Colonic mucosa (tissue), 4 donors: ENCODE measurements at regions of chr3 and their contacts with region 1.

Region 1: DNA sequence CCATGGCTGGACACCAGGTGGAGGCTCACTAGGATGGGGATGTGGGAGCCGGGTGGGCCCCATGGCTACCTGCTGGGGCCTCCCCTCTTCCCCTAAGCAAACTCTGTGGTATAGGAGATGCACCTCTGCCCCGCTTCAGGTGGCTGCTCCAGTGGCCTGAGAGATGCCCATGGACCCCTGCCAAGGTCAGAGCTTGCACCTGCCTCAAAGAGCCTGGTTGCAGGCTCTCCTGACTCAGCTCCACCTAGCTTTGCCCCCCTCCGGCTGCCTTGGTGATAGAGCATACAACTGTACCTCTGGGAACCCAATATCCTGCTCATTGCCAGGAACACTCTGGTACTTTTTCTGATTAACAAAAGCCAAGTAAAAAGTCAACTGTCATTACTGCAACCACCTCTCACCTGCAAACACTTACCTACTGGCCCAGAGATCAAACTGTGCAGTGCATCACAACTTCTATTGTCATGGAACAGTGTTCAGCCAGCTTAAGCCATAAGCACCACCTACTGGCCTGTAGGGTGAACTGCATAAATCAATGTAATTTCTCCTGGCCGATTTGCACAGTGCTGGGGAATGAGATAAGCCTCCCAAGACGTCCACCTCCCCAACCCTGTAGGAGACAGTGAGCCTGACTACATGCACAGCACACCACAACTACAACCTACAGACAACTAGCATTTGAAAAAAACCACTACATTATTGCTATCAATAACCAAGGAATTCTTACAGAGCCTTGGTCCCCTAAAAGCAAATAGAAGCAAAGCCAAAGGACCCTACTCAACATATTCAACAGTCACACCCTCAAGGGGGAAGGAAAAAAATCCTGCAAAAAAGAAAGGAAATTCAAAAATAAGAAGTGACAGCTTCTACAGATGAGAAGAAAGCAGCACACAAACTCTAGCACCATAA is 352.4 kb upstream of the ARHGEF26 start:
- DNase-seq: peak; percentile 56
- H3K4me3 ChIP-seq: no peak overlapping the region
- H3K27ac ChIP-seq: no peak overlapping the region
- H3K4me1 ChIP-seq: no peaks in the 10 kb centered on the region
- H3K27me3 ChIP-seq: no peaks in the 10 kb centered on the region
- CTCF ChIP-seq: peak; percentile 82

Region 2: GRCh38 chr3:153595186-153595815 is 173.5 kb before region 1 on chr3:
- intact Hi-C with region 1: loop called (anchors 10 kb)
- DNase-seq: no peak
- H3K4me3 ChIP-seq: no peak overlapping the region
- H3K27ac ChIP-seq: no peak overlapping the region
- H3K4me1 ChIP-seq: no peaks in the 10 kb centered on the region
- H3K27me3 ChIP-seq: no peaks in the 10 kb centered on the region
- CTCF ChIP-seq: peak; percentile 40

Region 3: DNA sequence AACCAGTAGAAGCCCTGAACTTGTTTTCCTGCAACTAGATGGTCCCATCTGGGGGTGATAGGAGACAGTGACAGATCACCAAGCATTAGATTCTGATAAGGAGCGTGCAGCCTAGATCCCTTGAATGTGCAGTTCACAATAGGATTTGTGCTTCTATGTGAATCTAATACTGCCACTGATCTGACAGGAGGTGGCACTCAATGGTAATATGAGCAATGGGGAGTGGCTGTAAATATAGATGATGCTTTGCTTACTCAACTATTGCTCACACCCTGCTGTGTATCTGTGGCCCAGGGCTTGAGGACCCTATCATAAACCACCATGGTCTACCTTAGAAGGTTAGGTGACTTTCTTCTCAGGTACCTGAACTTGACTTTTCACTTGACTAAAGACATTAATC is 64.7 kb before region 1 on chr3:
- intact Hi-C with region 1: loop called (anchors 5 kb)
- DNase-seq: no peak
- H3K4me3 ChIP-seq: no peak overlapping the region
- H3K27ac ChIP-seq: no peak overlapping the region
- H3K4me1 ChIP-seq: no peaks in the 10 kb centered on the region
- H3K27me3 ChIP-seq: no peaks in the 10 kb centered on the region
- CTCF ChIP-seq: no peak

Region 4: GRCh38 chr3:153866901-153867300 is 98.1 kb after region 1 on chr3:
- intact Hi-C with region 1: no loop called
- DNase-seq: no peak
- H3K4me3 ChIP-seq: no peak overlapping the region
- H3K27ac ChIP-seq: no peak overlapping the region
- H3K4me1 ChIP-seq: no peaks in the 10 kb centered on the region
- H3K27me3 ChIP-seq: no peaks in the 10 kb centered on the region
- CTCF ChIP-seq: no peak

Region 5: DNA sequence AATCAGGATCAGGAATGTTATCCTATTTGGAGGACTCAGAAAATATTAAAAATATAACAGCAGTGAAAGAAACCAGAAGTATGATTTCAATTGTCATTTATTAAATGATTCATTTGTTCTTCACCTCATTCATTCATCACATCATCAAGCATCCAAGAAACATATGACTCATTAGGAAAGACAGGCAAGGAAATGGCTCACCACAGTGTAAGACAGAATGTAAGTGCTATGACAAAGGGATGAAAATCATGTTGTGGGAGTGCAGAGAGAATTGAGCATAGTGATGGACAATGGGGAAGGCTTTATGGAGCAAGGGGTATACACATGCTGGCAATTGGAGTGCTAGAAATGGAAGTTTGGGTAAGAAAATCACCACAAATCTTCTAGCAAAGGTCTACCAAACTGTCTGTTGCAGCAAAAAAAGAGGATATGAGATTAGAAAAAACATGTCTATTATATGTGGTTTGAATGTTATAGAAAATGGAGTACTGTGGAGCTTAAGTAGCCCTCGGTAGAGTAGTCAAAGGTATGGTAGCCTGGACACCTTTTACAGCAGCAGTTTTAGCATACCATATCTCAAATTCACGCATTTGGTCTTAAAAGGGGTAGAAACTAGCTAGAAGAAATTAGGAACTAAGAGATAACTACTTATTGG is 772.3 kb after region 1 on chr3:
- intact Hi-C with region 1: no loop called
- DNase-seq: no peak
- H3K4me3 ChIP-seq: no peak overlapping the region
- H3K27ac ChIP-seq: no peak overlapping the region
- H3K4me1 ChIP-seq: no peaks in the 10 kb centered on the region
- H3K27me3 ChIP-seq: no peaks in the 10 kb centered on the region
- CTCF ChIP-seq: no peak